Tibial artery (tissue), 4 donors: ENCODE measurements at regions of chr1 and their contacts with region 1.

Region 1: DNA sequence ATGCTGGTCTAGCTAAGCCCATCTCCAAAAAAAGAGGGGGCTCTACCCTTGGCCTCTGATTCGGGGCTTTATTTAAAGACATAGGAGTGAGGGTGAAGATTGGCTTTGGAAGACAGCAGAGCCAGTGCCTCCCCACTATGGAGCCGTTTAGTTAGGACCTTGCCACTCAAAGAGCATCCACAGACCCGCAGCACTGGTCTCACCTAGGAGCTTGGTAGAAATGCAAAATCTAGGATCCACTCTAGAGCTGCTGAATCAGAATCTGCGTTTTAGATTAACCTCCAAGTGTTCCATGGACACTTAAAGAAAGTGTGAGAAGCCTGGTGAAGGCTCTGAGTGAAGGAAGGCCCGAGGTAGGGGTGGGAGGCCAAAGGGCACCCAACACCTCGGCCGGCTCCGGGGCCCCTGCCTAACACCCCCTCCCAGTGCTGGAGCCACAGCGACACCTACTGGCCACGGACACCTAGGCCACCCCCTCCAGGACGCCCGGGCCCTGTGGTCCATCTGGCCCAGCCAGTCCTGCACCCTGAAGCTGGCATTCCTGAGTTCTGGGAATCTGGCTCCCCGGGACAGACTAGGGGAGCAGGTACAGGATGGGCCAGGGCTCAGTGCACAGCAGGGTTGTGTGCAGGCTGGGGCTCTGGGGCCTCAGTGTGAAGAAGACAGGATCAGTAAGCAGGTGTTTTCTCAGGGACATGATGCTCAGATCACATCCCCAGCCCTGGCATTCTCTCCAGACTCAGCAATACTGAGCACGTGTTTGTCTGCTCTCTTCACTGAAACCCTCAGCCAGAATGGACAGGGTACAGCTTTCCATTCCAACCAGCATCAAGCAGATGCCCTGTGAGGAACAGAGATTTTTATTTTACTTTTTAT is 79.2 kb downstream of the TMEM53 start:
- DNase-seq: peak; percentile 69 to 81
- H3K4me3 ChIP-seq: no peak overlapping the region
- H3K27ac ChIP-seq: no peak overlapping the region
- H3K4me1 ChIP-seq: no peaks in the 10 kb centered on the region
- H3K27me3 ChIP-seq: peaks cover 0 to 40% of the 10 kb centered on the region in 2 donors
- CTCF ChIP-seq: peak; percentile 90 to 96

Region 2: DNA sequence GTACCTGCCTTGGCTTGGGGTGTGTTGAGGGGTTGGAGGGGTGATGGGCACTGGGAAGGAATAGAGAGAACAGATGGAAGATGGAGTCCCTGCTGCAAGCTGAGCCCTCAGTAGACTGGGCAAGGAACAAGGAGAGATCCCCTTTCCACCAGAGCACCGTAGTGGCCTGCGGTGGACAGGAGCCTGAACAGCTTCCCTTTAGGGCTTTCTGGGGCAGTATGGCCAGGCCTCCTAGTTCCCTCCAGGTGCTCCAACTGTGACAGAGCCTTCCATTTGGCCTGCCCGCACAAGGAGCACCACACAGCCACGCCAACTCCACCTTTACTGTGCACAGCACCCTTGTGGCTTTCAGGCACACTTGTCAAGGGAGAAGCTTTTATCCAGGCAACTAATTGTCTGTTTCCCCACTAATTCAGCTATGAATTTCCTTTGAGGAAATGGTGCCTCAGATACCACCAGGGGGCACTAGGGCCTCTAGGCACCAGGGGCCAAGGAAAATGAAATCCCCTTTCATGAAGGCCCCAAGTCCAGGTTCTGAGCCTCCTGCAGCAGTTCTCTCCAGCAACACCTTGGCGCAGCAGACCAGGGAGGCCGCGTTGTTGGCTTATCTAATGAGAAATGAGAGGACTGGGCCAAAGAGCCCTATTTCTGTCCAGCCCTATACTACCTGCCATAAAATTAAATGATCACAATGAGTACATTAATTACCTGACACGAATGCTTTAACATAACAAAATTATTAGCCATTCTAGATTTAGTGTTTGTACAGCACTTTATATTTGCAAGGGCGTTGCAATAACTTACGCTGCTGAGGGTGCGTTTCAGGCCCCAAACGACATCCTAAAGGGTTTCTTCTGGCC is 217.0 kb before region 1 on chr1:
- intact Hi-C with region 1: loop called (anchors 5 kb)
- DNase-seq: peak in 1 of 2 donors; percentile 30
- H3K4me3 ChIP-seq: no peak overlapping the region
- H3K27ac ChIP-seq: no peak overlapping the region
- H3K4me1 ChIP-seq: no peaks in the 10 kb centered on the region
- H3K27me3 ChIP-seq: no peaks in the 10 kb centered on the region
- CTCF ChIP-seq: peak; percentile 58 to 59

Region 3: GRCh38 chr1:44660176-44660575 is 65.1 kb after region 1 on chr1:
- intact Hi-C with region 1: no loop called
- DNase-seq: no peak
- H3K4me3 ChIP-seq: no peak overlapping the region
- H3K27ac ChIP-seq: no peak overlapping the region
- H3K4me1 ChIP-seq: peaks cover 0 to 7% (median 0%) of the 10 kb centered on the region in 4 donors
- H3K27me3 ChIP-seq: no peaks in the 10 kb centered on the region
- CTCF ChIP-seq: no peak

Region 4: GRCh38 chr1:44970317-44970716 is 375.2 kb after region 1 on chr1:
- intact Hi-C with region 1: no loop called
- DNase-seq: no peak
- H3K4me3 ChIP-seq: no peak overlapping the region
- H3K27ac ChIP-seq: no peak overlapping the region
- H3K4me1 ChIP-seq: peaks cover 0 to 14% (median 5%) of the 10 kb centered on the region in 4 donors
- H3K27me3 ChIP-seq: no peaks in the 10 kb centered on the region
- CTCF ChIP-seq: no peak

Region 5: GRCh38 chr1:45033356-45033755 is 438.2 kb after region 1 on chr1:
- intact Hi-C with region 1: no loop called
- DNase-seq: no peak
- H3K4me3 ChIP-seq: no peak overlapping the region
- H3K27ac ChIP-seq: no peak overlapping the region
- H3K4me1 ChIP-seq: no peaks in the 10 kb centered on the region
- H3K27me3 ChIP-seq: no peaks in the 10 kb centered on the region
- CTCF ChIP-seq: no peak